GM10248 (cell line): ENCODE measurements at regions of chr3 and their contacts with region 1.

Region 1: GRCh38 chr3:191136347-191136746 is 62.7 kb upstream of the OSTN start:
- DNase-seq: peak; percentile 33
- CTCF ChIP-seq: peak; percentile 51

Region 2: DNA sequence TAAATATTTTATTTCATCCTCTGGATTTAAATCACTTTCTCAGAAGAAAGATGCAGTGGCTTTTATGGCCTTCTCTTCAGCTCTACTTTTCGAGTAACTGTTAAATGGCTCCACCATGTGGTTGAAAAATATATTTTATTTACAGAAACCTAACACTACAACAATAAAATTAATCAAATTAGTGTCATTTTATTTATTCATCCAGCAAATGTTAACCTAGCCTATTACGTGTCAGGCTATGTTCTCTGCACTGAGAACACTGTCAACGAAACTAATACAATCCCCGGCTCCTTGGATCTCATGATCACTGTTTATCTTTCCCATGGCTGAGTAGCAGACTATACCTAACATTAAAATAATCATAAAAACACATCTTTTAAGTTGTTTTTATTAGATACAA is 85.3 kb before region 1 on chr3:
- CTCF ChIA-PET with region 1: no interaction called
- POLR2A ChIA-PET with region 1: no interaction called
- DNase-seq: peak; percentile 20
- CTCF ChIP-seq: peak; percentile 45

Region 3: DNA sequence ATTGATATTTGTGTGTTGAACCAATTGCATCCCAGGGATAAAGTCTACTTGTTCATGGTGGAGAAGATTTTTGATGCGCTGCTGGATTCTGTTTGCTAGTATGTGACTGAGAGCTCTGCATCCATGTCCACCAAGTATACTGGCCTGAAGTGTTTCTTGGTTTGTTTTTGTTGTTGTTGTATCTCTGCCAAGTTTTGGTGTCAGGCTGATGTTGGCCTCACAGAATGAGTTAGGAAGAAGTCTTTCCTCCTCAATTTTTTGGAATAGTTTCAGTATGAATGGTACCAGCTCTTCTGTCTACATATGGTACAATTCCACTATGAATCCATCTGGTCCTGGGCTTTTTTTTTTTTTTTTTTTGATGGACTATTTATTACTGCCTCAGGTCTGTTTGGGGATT is 11.8 kb after region 1 on chr3:
- CTCF ChIA-PET with region 1: interaction called, 14 read pairs
- POLR2A ChIA-PET with region 1: no interaction called
- DNase-seq: no peak
- CTCF ChIP-seq: no peak